Heart right ventricle (tissue), 16 donors: ENCODE measurements at regions of chr2 and their contacts with region 1.

Region 1: GRCh38 chr2:7044261-7045250 is 127.3 kb downstream of the RNF144A start:
- DNase-seq: peak; percentile 68 to 69
- ATAC-seq: peak in 7 of 8 donors; percentile 53 to 88 (median 80)
- H3K4me3 ChIP-seq: no peak overlapping the region
- H3K27ac ChIP-seq: no peak overlapping the region
- H3K4me1 ChIP-seq: peaks cover 0 to 14% (median 8%) of the 10 kb centered on the region in 9 donors
- H3K27me3 ChIP-seq: no peaks in the 10 kb centered on the region
- CTCF ChIP-seq: peak; percentile 95 to 98 (median 96)

Region 2: DNA sequence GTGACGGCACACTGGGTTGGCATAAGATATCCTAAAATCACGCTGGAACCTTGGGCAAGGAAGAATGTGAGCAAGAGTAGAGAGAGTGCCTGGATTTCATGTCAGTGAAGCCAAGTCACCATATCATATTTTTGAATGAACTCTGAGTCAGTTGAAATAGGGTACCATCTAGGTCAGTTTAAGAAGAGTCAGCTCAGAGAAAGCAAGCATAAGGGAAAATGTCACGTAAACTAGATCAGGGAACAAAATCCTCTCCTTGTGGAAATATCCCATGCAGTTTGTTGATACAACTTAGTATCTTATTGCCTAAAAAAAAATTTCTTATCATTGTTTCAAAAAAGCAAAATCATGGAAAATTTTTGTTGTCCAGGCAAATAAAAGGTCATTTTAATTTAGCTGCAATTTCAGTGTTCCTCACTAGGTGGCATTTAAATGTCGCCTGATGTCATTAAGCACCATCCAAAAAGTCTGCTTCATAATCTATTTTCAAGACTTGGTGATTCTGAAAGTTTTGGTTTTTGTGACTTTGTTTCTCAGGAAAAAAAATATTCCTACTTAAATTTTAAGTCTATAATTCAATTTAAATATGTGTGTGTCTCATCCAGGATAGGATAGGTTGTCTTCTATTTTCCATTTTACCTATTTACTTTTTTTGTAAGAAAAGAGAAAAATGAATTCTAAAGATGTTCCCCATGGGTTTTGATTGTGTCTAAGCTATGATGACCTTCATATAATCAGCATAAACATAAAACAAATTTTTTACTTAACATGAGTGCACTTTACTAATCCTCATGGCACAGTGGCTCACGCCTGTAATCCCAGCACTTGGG is 147.4 kb before region 1 on chr2:
- intact Hi-C with region 1: loop called (anchors 1 to 5 kb)
- DNase-seq: no peak
- ATAC-seq: peak in 6 of 8 donors; percentile 18 to 81 (median 64)
- H3K4me3 ChIP-seq: no peak overlapping the region
- H3K27ac ChIP-seq: peak overlapping the region in 3 of 10 donors; percentile 2 to 23 (median 11)
- H3K4me1 ChIP-seq: peaks cover 0 to 14% (median 0%) of the 10 kb centered on the region in 9 donors
- H3K27me3 ChIP-seq: no peaks in the 10 kb centered on the region
- CTCF ChIP-seq: peak; percentile 48 to 82 (median 76)